ENCODE measurements at regions of chr17 and their contacts with region 1.

Region 1: DNA sequence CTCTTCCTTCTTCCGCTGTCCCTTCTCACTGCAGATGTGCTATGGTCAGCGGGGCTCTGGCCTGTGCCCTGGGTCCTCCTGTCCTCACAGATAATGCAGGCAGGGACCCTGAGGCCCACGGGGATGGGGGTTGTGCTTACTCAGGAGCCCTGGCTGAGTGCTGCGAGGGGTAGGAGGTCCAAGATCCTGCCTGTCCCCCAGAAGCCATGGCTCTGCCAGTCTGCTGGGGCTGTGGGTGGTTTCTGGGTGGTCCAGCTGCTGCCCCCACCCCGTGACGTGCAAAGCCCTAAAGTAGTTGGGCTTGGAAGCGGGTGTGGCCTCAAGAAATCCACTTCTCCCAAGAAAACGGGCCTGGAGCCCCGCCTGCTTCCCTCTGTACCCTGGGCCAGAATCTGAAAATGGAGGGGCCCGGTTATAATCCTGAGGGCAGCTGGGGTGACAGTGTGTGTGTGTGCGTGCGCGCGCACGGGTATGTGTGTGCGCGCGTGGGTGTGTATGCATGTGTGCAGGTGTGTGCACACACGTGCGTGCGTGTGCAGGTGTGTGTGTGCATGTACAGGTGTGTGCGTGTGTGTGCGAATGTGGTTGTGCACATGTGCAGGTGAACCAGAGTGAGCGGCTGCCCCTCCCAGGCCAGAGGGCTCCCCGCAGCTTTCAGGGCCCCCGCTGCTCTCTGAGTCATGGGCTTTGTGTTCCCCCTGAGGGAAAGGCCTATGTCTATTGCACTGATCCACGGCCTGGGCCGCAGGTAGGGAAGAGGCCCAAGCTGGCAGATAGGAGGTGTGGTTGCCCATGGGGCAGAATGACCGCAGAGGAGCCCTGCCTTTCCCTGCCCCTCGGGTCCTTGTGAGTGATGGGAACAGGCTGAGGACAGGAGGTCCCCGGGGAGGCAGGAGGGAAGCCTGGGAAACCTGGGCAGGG is 13.8 kb downstream of the SPNS2 start:
- DNase-seq: no peak

Region 2: GRCh38 chr17:4354862-4355514 is 157.5 kb before region 1 on chr17:
- intact Hi-C with region 1: no loop called
- DNase-seq: no peak

Region 3: GRCh38 chr17:4525691-4526397 is 13.4 kb after region 1 on chr17:
- intact Hi-C with region 1: loop called in 1 of 2 experiments (anchors 1 kb)
- DNase-seq: no peak

Measured in posterior vena cava (tissue), 2 donors.